ENCODE measurements at regions of chr19 and their contacts with region 1.

Region 1: GRCh38 chr19:52189735-52190486 is at the start of gene PPP2R1A:
- DNase-seq: peak; percentile 98
- H3K4me3 Mint-ChIP-seq: peak within 1 kb of the TSS; percentile 98
- H3K27ac Mint-ChIP-seq: peak within 1 kb of the TSS; percentile 99
- H3K4me1 Mint-ChIP-seq: peaks cover 32% of the 10 kb centered on the region
- H3K27me3 Mint-ChIP-seq: no peaks in the 10 kb centered on the region
- total RNA-seq, gene PPP2R1A: 218 and 225 TPM in 2 replicates

Region 2: DNA sequence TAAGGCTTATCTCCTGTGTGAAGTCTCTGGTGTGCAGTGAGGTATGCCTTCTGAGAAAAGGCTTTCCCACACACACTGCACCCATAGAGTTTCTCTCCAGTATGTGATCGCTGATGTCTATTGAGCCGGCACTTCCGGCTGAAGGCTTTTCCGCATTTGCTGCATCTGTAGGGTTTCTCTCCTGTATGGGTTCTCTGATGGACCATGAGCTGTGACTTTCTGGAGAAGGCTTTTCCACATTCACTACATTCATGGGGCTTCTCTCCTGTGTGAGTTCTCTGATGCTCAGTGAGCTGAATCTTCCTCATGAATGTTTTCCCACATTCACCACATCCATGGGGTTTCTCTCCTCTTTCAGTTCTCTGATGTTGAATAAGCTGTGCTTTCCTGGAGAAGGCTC is 316.8 kb before region 1 on chr19:
- intact Hi-C with region 1: no loop called
- DNase-seq: no peak
- H3K4me3 Mint-ChIP-seq: no peak overlapping the region
- H3K27ac Mint-ChIP-seq: no peak overlapping the region
- H3K4me1 Mint-ChIP-seq: no peaks in the 10 kb centered on the region
- H3K27me3 Mint-ChIP-seq: no peaks in the 10 kb centered on the region

Region 3: DNA sequence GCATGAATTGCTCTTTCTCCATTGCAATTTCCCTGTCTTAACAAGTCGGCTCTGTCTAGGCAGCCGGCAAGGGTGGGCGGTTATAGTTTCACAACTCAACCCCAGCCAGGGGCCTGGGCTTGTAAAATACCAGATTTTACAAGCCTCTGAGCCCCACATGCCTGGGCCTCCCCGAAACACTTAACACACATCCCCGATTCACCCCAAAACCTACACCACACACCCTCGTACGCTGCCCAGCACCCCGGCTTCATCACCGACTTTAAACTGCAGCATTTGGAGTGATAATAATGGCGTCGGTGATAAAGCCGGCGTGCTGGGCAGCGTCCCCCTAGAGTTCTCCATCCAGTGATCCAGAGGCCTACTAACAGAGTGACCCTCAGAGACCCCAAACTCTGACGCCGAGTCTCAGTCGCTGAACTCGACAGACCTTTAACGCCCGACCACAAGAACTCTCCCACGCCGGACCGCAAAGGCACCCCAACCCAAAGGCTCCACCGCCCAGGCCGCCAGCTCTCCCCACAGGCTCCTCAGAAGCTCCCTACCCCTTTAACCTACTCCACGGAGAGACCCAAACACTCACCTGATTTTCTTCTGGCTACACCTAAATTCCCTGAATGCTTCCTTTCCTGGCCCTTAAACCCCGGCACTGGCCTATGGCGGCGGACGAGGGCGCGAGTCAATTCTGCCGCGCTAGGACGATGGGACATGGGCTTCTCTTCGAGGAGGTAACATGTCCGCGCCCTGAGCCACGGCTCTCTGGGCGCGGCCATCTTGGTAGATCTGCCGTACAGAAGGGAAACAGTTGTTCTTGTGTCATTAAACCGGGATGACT is 285.4 kb before region 1 on chr19 and contains the start of gene ZNF649:
- intact Hi-C with region 1: loop called (anchors 10 kb)
- DNase-seq: peak; percentile 72
- H3K4me3 Mint-ChIP-seq: peak within 1 kb of the TSS; percentile 99
- H3K27ac Mint-ChIP-seq: peak within 1 kb of the TSS; percentile 98
- H3K4me1 Mint-ChIP-seq: peaks cover 13% of the 10 kb centered on the region
- H3K27me3 Mint-ChIP-seq: peaks cover 4% of the 10 kb centered on the region
- total RNA-seq, gene ZNF649: 11.8 and 12.1 TPM in 2 replicates

Region 4: DNA sequence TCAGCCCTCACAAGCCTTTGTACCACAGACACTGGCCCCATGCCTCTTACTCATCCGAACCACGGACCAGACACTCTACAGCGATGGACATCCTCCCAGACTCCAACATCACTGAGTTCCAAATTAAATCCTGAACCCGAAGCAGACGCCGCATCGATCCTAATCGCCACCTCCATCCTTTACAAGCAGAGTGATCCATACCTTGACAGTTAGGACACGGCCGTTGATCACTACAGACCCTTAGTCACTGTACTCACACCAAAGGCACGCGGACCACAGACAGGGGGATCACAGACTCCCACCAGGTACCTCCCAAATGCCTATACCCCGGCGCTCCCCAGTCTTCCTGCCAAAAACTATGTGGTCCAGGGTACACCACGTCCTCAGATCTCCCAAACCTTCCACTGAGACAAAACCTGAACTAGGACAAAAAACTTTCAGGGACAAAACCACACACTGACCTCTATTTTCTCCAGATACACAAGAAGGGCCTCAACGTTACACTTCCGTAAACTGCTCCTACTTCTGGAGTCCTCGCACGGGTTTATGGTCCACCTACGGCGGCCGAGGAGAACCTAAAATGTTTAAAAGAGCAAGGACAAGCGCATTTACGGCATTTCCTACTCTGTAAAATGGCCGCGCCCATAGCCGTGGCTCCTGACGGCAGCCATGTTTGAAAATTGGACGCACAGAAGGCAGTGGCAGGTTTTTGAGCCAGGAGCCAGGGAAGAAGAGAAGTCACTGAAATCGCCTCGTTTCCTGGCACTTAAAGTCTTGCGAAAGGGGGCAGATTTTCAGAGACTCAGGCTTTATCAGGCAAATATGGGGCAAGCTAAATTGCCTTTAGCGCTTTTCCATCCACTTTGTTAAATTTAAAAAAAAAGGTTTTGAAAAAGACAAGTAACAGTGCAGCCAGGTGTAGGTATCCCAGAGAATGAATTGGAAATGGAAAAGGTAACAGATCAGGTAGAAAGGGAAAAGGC is 203.3 kb before region 1 on chr19 and contains the start of gene ZNF350:
- intact Hi-C with region 1: loop called (anchors 5 kb)
- DNase-seq: peak; percentile 84
- H3K4me3 Mint-ChIP-seq: peak within 1 kb of the TSS; percentile 95
- H3K27ac Mint-ChIP-seq: peak within 1 kb of the TSS; percentile 89
- H3K4me1 Mint-ChIP-seq: peaks cover 8% of the 10 kb centered on the region
- H3K27me3 Mint-ChIP-seq: no peaks in the 10 kb centered on the region
- total RNA-seq, gene ZNF350: 9.1 and 9.2 TPM in 2 replicates

Region 5: GRCh38 chr19:52139252-52140031 is 50.5 kb before region 1 on chr19 and contains the start of gene ZNF616:
- intact Hi-C with region 1: loop called (anchors 1 kb)
- DNase-seq: peak; percentile 93
- H3K4me3 Mint-ChIP-seq: peak within 1 kb of the TSS; percentile 93
- H3K27ac Mint-ChIP-seq: peak within 1 kb of the TSS; percentile 91
- H3K4me1 Mint-ChIP-seq: peaks cover 16% of the 10 kb centered on the region
- H3K27me3 Mint-ChIP-seq: no peaks in the 10 kb centered on the region
- total RNA-seq, gene ZNF616: 6.6 and 8.5 TPM in 2 replicates

Region 6: DNA sequence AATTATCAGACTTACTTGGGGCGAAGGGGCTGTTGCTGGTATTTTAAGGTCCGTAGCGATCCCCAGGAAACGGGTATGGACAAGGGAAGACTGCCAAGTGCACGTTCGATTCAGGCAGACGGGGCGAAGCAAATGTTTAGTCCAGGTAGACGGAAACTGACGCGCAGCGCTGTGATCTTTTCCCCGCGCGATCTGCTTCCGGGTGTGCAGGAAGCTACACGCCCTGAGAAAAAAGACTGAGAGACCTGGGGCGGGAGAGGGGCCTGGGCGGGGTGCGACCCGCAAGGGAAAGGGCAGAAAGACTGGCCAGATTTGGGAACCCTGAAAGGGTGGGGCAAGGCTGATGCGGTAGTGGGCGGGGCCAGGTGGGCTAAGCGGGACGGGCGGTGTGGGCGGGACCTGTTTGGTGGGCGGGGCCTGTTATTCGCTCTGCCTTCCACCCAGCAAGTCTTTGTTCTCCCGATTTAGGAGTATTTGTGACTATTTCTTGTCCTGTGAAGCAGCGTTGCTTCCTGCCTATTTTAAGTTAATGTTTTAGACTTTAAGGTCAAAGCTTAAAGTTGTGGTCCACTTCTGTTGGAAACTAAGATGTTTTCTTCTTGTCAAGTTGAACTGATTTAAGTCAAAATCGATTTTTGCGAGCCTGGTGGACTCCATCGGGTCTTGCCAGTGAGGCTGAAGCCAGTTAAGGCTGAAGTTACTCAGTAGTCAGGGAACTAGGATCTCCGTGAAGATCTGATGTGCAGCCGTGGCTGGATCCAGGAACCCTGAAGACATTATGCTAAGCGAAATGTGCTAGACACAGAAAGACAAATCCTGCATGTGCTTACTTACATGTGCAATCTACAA is 18.4 kb before region 1 on chr19 and contains the start of gene ZNF836:
- intact Hi-C with region 1: loop called (anchors 1 kb)
- DNase-seq: peak; percentile 84
- H3K4me3 Mint-ChIP-seq: peak within 1 kb of the TSS; percentile 96
- H3K27ac Mint-ChIP-seq: peak within 1 kb of the TSS; percentile 92
- H3K4me1 Mint-ChIP-seq: peaks cover 14% of the 10 kb centered on the region
- H3K27me3 Mint-ChIP-seq: no peaks in the 10 kb centered on the region
- total RNA-seq, gene ZNF836: 7.2 and 8.8 TPM in 2 replicates

Region 7: GRCh38 chr19:52269338-52270261 is 79.7 kb after region 1 on chr19 and contains the start of gene ZNF766:
- intact Hi-C with region 1: loop called (anchors 1 kb)
- DNase-seq: peak; percentile 95
- H3K4me3 Mint-ChIP-seq: peak within 1 kb of the TSS; percentile 98
- H3K27ac Mint-ChIP-seq: peak within 1 kb of the TSS; percentile 95
- H3K4me1 Mint-ChIP-seq: peaks cover 11% of the 10 kb centered on the region
- H3K27me3 Mint-ChIP-seq: no peaks in the 10 kb centered on the region
- total RNA-seq, gene ZNF766: 15.9 and 18.2 TPM in 2 replicates

Measured in activated T-helper 2 cell treated with anti-CD3 and anti-CD28 coated beads, Interferon-gamma antibody, Interleukin-2, Interleukin-4, amounts not matched to agents 10 μg/mL and 5 μg/mL and 100 μg/mL, durations not matched to agents 14 hours and 24 hours and 36 hours (primary cell).